Left colon (tissue), 2 donors: ENCODE measurements at regions of chr19 and their contacts with region 1.

Region 1: DNA sequence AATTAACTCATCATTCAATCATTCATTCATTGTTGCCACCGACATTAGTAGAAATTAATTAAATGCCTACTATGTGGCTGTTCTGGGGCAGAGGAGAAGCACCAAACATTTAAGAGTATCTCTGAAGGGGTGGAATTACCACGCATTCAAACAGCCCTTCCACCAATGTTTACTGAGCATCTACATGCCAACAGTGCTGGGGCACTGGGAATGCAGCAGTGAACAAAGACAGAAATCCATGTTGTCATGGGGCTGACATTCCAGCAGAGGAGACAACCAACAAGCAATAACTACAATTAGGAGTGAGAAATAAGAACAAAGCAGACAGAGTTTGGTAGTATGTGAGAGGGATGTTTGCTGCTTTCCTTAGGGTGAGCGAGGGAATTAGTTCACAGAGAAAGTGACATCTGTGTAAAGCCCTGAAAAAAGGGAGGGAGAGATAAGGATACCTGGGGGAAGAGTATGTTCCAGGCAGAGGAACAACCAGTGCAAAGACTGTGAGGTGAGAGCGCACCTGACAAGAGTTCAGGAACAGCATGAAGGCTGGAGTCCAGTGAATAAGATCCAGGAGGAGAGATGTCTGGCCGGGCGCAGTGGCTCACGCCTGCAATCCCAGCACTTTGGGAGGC is 1.3 kb upstream of the PAK4 start:
- DNase-seq: no peak
- ATAC-seq: no peak

Region 2: GRCh38 chr19:38647368-38647965 is 476.8 kb before region 1 on chr19 and contains the start of gene ACTN4:
- intact Hi-C with region 1: no loop called
- DNase-seq: peak; percentile 97 to 100
- ATAC-seq: peak; percentile 65
- total RNA-seq, gene ACTN4: 971 to 1,150 TPM

Region 3: GRCh38 chr19:39187559-39187957 is 63.3 kb after region 1 on chr19:
- intact Hi-C with region 1: loop called in 1 of 2 experiments (anchors 5 kb)
- DNase-seq: no peak
- ATAC-seq: peak; percentile 37

Region 4: DNA sequence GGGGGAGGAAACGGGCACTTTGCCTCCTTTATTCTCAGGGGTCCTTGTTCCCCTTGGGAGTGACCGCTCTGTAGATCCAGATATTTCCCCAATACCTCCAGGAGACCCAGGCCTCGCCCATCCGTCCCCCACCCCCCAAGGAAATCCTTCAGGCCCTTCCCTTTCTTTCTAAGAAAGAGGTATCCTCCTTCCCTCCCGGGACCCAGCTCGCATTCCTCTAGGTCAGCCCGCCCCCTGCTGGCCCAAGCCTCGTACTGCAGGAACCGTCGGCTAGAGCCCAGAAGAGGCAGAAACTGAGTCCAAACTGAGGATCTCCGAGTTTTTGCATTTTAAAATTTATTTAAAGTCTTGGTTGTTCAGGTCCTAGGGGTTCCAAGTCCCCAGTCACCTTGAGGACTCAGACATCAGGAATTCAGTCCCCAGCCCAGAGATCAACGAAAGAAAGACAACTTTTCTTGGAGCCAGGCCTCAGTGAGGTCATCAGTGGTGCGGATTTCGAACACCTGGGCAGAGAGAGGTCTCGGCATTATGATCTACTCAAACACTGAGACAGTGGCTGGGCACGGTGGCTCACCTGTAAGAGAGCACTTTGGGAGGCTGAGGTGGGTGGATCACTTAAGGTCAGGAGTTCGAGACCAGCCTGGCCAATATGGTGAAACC is 203.9 kb after region 1 on chr19:
- intact Hi-C with region 1: loop called (anchors 5 kb)
- DNase-seq: peak; percentile 59 to 87
- ATAC-seq: peak; percentile 77